ENCODE measurements at regions of chr14 and their contacts with region 1.

Region 1: DNA sequence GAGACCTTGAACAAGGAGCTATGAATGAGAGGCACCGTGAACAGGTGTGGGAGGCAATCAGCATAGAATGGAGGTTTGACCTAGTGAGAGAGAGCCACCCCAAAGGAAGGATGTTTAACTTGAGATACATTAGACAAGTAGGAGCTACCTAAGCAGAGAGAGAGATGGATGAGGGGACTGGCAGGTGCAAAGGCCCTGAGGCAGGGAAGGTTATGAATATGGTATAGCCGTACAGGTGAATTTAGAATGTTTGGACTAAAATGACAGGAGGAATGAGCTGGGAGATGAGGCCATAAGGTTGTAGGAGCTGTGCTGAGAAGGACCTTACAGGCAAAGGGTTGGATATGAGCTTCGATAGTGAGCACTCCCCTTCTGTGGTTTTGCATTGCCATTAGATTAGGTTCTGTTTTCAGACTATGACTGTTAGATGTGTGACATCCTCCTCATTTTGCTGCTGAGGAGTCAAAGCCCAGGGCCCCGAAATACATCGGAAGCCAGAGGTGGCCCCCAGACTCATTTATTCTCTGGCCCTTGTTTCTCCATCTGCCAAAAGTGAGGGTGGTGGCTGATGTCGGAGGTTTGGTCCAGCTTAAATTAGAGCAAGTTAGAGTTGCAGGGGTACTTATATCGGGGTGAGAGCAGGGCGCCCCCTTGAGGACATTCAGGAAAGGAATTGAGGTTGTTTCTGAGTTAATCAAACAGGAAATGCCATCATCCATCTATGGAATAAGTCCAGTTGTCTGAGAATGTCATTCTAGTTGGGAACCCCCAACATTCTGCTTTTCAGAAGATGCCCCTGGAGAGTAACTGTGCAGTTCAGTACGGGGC is 29.4 kb downstream of the SLC24A4 start:
- DNase-seq: peak; percentile 74
- ATAC-seq: peak; percentile 55
- H3K4me3 Mint-ChIP-seq: no peak overlapping the region
- H3K27ac Mint-ChIP-seq: no peak overlapping the region
- H3K4me1 Mint-ChIP-seq: no peaks in the 10 kb centered on the region
- H3K27me3 Mint-ChIP-seq: peaks cover 17% of the 10 kb centered on the region

Region 2: DNA sequence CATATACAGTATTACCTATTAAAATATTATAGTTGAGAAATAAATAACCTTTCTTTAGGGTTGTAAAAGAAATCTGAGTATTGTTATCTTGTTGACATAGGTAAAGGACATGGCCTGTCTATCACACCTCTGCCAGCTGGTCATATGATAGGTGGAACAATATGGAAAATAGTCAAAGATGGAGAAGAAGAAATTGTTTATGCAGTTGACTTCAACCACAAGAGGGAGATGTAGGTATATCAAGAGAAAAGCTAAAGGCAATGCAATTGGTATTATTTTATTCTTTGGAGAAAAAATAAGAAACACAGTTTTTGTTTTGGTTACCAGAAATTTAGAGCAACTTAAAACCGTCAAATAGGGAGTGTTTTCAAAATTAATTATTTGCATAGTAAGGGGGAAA is 217.1 kb before region 1 on chr14:
- CTCF ChIA-PET with region 1: interaction called, 10 read pairs
- POLR2A ChIA-PET with region 1: no interaction called
- DNase-seq: no peak
- ATAC-seq: no peak
- H3K4me3 Mint-ChIP-seq: no peak overlapping the region
- H3K27ac Mint-ChIP-seq: no peak overlapping the region
- H3K4me1 Mint-ChIP-seq: no peaks in the 10 kb centered on the region
- H3K27me3 Mint-ChIP-seq: no peaks in the 10 kb centered on the region

Region 3: DNA sequence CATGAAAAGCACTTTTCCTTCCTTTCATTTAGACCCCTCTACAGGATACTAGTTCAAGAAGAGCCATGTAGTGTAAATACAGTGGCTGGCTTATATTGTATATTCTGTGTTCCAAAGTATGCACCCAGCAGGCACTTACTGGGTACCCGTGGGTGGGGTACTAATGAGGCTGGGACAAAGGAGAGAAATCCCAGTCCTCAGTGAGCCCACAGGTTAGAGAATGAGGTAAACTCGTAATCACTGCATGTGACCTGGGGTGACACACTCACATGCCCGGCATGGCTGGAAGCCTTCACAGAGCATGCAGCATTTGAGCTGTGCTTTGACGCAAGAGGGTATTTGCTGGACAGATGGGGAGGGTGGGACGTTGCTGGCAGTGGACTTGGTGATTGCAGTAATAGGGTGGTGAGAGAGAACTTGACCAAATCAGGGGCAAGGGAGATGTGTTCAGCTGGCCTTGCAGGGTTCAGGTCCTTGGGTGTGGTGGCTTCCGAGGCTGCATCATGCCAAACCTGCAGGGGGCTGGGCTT is 12.2 kb before region 1 on chr14:
- CTCF ChIA-PET with region 1: interaction called, 10 read pairs
- POLR2A ChIA-PET with region 1: no interaction called
- DNase-seq: no peak
- ATAC-seq: no peak
- H3K4me3 Mint-ChIP-seq: no peak overlapping the region
- H3K27ac Mint-ChIP-seq: no peak overlapping the region
- H3K4me1 Mint-ChIP-seq: peaks cover 13% of the 10 kb centered on the region
- H3K27me3 Mint-ChIP-seq: peaks cover 30% of the 10 kb centered on the region

Region 4: GRCh38 chr14:92437729-92438285 is 85.4 kb after region 1 on chr14:
- CTCF ChIA-PET with region 1: no interaction called
- POLR2A ChIA-PET with region 1: no interaction called
- DNase-seq: no peak
- ATAC-seq: no peak
- H3K4me3 Mint-ChIP-seq: no peak overlapping the region
- H3K27ac Mint-ChIP-seq: no peak overlapping the region
- H3K4me1 Mint-ChIP-seq: peaks cover 9% of the 10 kb centered on the region
- H3K27me3 Mint-ChIP-seq: peaks cover 11% of the 10 kb centered on the region

Measured in activated CD8-positive, alpha-beta T cell treated with anti-CD3 and anti-CD28 coated beads, Interleukin-2, amount 10 ng/mL, durations not matched to agents 7 days and 5 days (primary cell).